ENCODE measurements at regions of chr1 and their contacts with region 1.

Region 1: GRCh38 chr1:8560611-8561544 is 243.0 kb downstream of the SLC45A1 start:
- DNase-seq: peak in 2 of 5 donors; percentile 21 to 26
- ATAC-seq: peak in 3 of 4 donors; percentile 63 to 79 (median 69)
- H3K4me3 ChIP-seq: no peak overlapping the region
- H3K27ac ChIP-seq: no peak overlapping the region
- H3K4me1 ChIP-seq: peaks cover 0 to 26% (median 13%) of the 10 kb centered on the region in 12 donors
- H3K27me3 ChIP-seq: no peaks in the 10 kb centered on the region
- CTCF ChIP-seq: peak; percentile 85 to 99 (median 95)
- POLR2A ChIP-seq: no peak

Region 2: GRCh38 chr1:8259498-8260290 is 301.2 kb before region 1 on chr1:
- intact Hi-C with region 1: no loop called
- DNase-seq: no peak
- ATAC-seq: no peak
- H3K4me3 ChIP-seq: no peak overlapping the region
- H3K27ac ChIP-seq: peak overlapping the region in 1 of 12 donors; percentile 43
- H3K4me1 ChIP-seq: no peaks in the 10 kb centered on the region
- H3K27me3 ChIP-seq: no peaks in the 10 kb centered on the region
- CTCF ChIP-seq: no peak
- POLR2A ChIP-seq: no peak

Region 3: GRCh38 chr1:8382051-8382505 is 178.8 kb before region 1 on chr1:
- intact Hi-C with region 1: no loop called
- DNase-seq: no peak
- ATAC-seq: peak; percentile 27 to 60 (median 46)
- H3K4me3 ChIP-seq: no peak overlapping the region
- H3K27ac ChIP-seq: peak overlapping the region in 9 of 12 donors; percentile 10 to 92 (median 41)
- H3K4me1 ChIP-seq: peaks cover 0 to 98% (median 91%) of the 10 kb centered on the region in 12 donors
- H3K27me3 ChIP-seq: no peaks in the 10 kb centered on the region
- CTCF ChIP-seq: no peak
- POLR2A ChIP-seq: no peak

Region 4: DNA sequence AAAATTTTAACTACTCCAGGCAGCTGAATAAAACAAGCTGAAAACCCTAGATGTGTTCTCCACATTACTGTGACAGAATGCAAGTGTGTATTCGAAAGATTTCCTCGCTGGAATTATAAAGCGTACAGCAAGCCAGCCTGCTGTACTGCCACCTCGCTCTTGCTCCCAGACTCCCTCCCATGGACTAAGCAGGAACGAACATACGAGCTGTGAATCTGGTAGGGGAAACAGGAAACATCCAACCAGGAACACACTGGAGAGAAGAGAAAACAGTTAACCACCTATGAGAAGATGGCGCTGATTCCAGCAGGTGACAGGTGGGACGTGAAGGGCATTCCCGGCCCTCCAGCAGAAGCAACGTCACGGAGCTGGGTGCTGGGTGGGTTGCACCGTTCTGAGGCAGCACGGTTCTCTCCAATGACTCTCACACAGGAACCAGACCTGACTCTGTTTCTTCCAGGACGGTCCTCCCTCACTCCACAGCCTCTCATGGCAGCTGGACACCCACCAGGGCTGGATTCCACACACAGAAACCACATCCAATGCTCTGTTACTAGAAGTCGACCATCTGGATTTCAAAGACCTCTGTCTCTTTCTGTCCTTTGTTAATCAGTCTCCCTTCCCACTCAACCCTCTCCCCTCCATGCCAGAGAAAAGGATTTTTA is 37.3 kb after region 1 on chr1:
- intact Hi-C with region 1: loop called in 1 of 10 experiments (anchors 5 kb)
- DNase-seq: peak in 4 of 5 donors; percentile 41 to 42 (median 42)
- ATAC-seq: peak; percentile 77 to 90 (median 90)
- H3K4me3 ChIP-seq: peak overlapping the region in 7 of 12 donors; percentile 4 to 48 (median 24)
- H3K27ac ChIP-seq: peak overlapping the region in 11 of 12 donors; percentile 3 to 69 (median 56)
- H3K4me1 ChIP-seq: peaks cover 0 to 61% (median 37%) of the 10 kb centered on the region in 12 donors
- H3K27me3 ChIP-seq: no peaks in the 10 kb centered on the region
- CTCF ChIP-seq: peak; percentile 18 to 73 (median 50)
- POLR2A ChIP-seq: no peak

Region 5: GRCh38 chr1:8671306-8671917 is 110.5 kb after region 1 on chr1:
- intact Hi-C with region 1: loop called (anchors 1 to 5 kb)
- DNase-seq: peak in 3 of 5 donors; percentile 39 to 48 (median 40)
- ATAC-seq: peak; percentile 60 to 75 (median 74)
- H3K4me3 ChIP-seq: no peak overlapping the region
- H3K27ac ChIP-seq: peak overlapping the region in 2 of 12 donors; percentile 28 to 33
- H3K4me1 ChIP-seq: peaks cover 3 to 58% (median 50%) of the 10 kb centered on the region in 12 donors
- H3K27me3 ChIP-seq: no peaks in the 10 kb centered on the region
- CTCF ChIP-seq: peak; percentile 74 to 92 (median 86)
- POLR2A ChIP-seq: no peak

Region 6: GRCh38 chr1:8718850-8719361 is 158.0 kb after region 1 on chr1:
- intact Hi-C with region 1: loop called in 1 of 10 experiments (anchors 2 kb)
- DNase-seq: no peak
- ATAC-seq: no peak
- H3K4me3 ChIP-seq: no peak overlapping the region
- H3K27ac ChIP-seq: no peak overlapping the region
- H3K4me1 ChIP-seq: peaks cover 0 to 5% (median 0%) of the 10 kb centered on the region in 12 donors
- H3K27me3 ChIP-seq: no peaks in the 10 kb centered on the region
- CTCF ChIP-seq: peak in 7 of 12 donors; percentile 7 to 37 (median 23)
- POLR2A ChIP-seq: no peak

Region 7: DNA sequence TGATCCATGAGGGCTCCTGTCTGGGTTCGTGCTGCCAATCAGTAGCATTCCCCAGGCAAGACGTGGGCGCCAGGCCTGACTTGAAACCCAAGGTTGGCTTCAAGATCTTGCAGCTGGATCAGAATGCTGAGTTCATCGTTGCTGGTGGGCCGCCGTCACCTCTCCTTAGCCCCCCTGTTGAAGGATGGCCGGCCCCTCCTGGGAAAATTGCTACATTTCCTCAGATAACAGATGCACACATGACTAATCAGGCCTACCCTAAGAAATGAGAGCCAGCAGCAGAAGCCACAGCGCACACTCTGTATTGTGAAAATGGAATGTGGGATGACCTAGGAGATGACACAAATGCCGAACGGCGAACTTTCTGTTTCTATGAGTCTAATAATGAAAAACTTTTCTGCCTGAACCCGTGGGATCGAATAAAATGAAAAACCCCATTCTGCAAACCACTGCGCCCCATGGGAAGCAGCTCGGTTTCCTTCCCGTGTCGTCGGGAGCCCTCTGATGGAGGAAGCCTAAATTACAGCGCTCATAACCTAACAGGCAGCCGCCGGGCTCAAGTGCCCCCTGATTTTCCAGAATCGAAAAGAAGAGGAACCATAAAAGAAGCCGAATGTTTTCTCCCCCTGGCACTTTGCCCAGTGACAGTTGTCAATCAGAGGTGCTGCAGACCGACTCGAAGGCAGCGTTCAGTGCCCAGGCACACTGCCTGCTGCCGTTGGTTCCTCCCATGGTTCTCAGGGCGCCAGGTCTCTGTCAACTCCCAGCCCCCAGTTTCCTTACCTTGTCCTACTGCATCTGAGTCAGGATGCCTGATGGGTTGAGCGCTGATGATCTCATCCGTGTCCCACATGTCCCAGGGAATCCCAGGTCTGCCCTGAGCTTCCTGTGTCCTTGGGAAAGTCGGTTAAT is 635.5 kb after region 1 on chr1:
- intact Hi-C with region 1: no loop called
- DNase-seq: peak; percentile 70 to 82 (median 77)
- ATAC-seq: peak; percentile 35 to 74 (median 70)
- H3K4me3 ChIP-seq: peak overlapping the region in 9 of 12 donors; percentile 4 to 27 (median 17)
- H3K27ac ChIP-seq: peak overlapping the region in 11 of 12 donors; percentile 11 to 84 (median 49)
- H3K4me1 ChIP-seq: peaks cover 4 to 44% (median 27%) of the 10 kb centered on the region in 12 donors
- H3K27me3 ChIP-seq: peaks cover 0 to 40% (median 18%) of the 10 kb centered on the region in 9 donors
- CTCF ChIP-seq: peak; percentile 65 to 91 (median 86)
- POLR2A ChIP-seq: no peak